ENCODE measurements at regions of chr14 and their contacts with region 1.

Region 1: GRCh38 chr14:95098984-95099599 is 58.2 kb downstream of the DICER1 start:
- DNase-seq: no peak
- H3K4me3 ChIP-seq: no peak overlapping the region
- H3K27ac ChIP-seq: no peak overlapping the region
- H3K4me1 ChIP-seq: peaks cover 21 to 71% (median 54%) of the 10 kb centered on the region in 4 donors
- H3K27me3 ChIP-seq: no peaks in the 10 kb centered on the region
- CTCF ChIP-seq: peak; percentile 62 to 78 (median 67)
- EP300 ChIP-seq: no peak
- POLR2A ChIP-seq: no peak

Region 2: DNA sequence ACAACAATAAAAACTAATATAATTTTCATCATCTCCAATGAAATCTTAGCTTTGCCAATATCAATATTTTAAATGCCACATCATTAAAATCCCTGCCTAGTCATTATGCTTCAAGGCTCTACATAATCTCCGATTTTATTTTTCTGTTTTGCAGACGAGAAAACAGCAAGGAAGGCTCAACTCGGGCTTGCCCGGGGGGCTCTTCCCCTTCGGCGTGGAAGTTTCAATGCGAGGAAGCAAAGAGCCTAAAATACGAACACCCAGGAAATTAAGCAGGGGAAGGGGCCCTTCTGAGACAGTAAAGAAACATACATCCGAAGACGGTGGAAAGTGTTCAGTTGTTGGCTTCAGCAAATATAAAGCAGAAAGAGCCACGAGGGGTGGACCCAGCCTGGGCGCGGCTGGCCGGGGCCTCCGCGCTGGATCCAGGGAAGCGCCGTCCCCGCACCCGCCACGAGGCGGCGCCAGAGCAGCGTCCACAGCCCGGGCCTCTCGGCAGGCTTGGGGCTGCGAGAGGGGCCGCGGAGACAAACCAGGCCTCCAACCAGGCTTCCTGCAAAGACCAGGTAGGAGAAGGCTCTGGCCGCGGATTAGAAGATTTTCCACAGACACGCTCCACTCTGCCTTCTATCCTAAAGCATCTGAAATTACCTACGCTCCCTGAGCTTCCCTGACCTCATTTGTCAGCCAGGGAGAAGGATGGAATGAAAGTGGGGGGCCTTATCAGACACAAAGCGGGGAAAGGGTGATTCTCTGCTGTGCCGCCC is 409.7 kb before region 1 on chr14:
- intact Hi-C with region 1: loop called (anchors 2 kb)
- DNase-seq: no peak
- H3K4me3 ChIP-seq: peak overlapping the region in 3 of 4 donors; percentile 18 to 32 (median 27)
- H3K27ac ChIP-seq: no peak overlapping the region
- H3K4me1 ChIP-seq: peaks cover 0 to 9% (median 7%) of the 10 kb centered on the region in 4 donors
- H3K27me3 ChIP-seq: peaks cover 0 to 21% (median 0%) of the 10 kb centered on the region in 4 donors
- CTCF ChIP-seq: peak in 2 of 3 experiments; percentile 88 to 97
- EP300 ChIP-seq: no peak
- POLR2A ChIP-seq: no peak

Region 3: DNA sequence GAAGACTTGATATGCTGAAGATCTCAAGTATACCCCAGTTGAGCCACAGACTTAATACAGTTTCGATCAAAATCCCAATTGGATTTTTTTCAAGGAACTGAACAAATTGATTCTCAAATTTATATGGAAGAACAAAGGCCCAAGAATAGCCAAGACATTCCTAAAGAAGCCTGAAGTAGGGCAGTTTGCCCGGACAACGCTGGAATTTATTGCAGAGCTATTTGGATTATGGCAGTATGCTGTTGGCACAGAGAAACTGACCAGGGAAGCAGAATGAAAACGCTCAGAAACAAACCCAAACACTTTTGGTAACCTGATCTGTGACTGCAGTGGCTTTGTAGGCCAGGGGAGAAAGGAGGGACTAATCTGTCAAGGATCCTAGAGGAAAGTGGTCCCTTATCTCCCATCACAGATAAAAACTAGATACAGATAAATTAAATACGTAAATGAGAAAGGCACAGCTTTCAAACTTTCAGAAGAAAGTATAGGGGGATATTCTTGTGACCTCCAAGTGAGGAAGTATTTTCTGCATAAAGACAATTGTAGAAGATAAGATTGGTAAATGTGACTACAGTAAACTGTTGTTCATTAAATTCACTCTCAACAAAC is 293.3 kb before region 1 on chr14:
- intact Hi-C with region 1: loop called (anchors 5 kb)
- DNase-seq: no peak
- H3K4me3 ChIP-seq: no peak overlapping the region
- H3K27ac ChIP-seq: peak overlapping the region in 3 of 4 donors; percentile 3 to 55 (median 46)
- H3K4me1 ChIP-seq: peaks cover 0 to 18% (median 14%) of the 10 kb centered on the region in 4 donors
- H3K27me3 ChIP-seq: no peaks in the 10 kb centered on the region
- CTCF ChIP-seq: no peak
- EP300 ChIP-seq: no peak
- POLR2A ChIP-seq: no peak

Region 4: GRCh38 chr14:94904636-94905035 is 194.5 kb before region 1 on chr14:
- intact Hi-C with region 1: loop called (anchors 10 kb)
- DNase-seq: no peak
- H3K4me3 ChIP-seq: no peak overlapping the region
- H3K27ac ChIP-seq: no peak overlapping the region
- H3K4me1 ChIP-seq: peaks cover 0 to 7% (median 3%) of the 10 kb centered on the region in 4 donors
- H3K27me3 ChIP-seq: peaks cover 0 to 2% (median 0%) of the 10 kb centered on the region in 4 donors
- CTCF ChIP-seq: no peak
- EP300 ChIP-seq: no peak
- POLR2A ChIP-seq: no peak

Region 5: GRCh38 chr14:95431199-95432143 is 332.4 kb after region 1 on chr14:
- intact Hi-C with region 1: loop called (anchors 5 kb)
- DNase-seq: no peak
- H3K4me3 ChIP-seq: no peak overlapping the region
- H3K27ac ChIP-seq: peak overlapping the region in 2 of 4 donors; percentile 22 to 34
- H3K4me1 ChIP-seq: peaks cover 4 to 9% (median 8%) of the 10 kb centered on the region in 4 donors
- H3K27me3 ChIP-seq: peaks cover 0 to 3% (median 0%) of the 10 kb centered on the region in 4 donors
- CTCF ChIP-seq: peak in 2 of 3 experiments; percentile 33 to 55
- EP300 ChIP-seq: no peak
- POLR2A ChIP-seq: no peak